ENCODE measurements at regions of chr9 and their contacts with region 1.

Region 1: DNA sequence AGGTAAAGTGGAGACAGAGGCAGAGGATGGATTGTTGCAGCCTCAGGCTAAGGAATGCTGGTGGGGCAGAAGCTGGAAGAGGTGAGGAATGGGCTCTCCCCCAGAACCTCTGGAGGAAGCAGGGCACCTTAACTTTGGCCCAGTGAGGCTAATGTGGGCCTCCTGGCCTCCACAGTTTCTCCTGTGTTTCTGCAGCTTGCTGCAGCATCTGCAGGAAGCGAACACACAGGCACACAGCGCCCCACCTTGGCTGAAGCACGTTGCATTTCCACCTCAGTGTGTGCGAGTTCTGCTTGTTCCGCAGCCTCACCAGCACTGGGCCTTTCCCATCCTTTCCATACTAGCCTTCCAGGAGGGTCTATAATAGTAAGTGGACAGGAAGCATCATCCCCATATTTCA is 27.2 kb upstream of the ASS1 start:
- DNase-seq: no peak
- H3K4me3 ChIP-seq: no peak overlapping the region
- H3K27ac ChIP-seq: no peak overlapping the region
- H3K4me1 ChIP-seq: no peaks in the 10 kb centered on the region
- H3K27me3 ChIP-seq: peaks cover 0 to 13% of the 10 kb centered on the region in 2 donors
- CTCF ChIP-seq: no peak

Region 2: GRCh38 chr9:129854588-129855110 is 563.0 kb before region 1 on chr9:
- intact Hi-C with region 1: loop called (anchors 5 kb)
- DNase-seq: no peak
- H3K4me3 ChIP-seq: no peak overlapping the region
- H3K27ac ChIP-seq: peak overlapping the region in 1 of 2 donors; percentile 5
- H3K4me1 ChIP-seq: peaks cover 0 to 47% (median 29%) of the 10 kb centered on the region in 4 donors
- H3K27me3 ChIP-seq: no peaks in the 10 kb centered on the region
- CTCF ChIP-seq: no peak

Region 3: DNA sequence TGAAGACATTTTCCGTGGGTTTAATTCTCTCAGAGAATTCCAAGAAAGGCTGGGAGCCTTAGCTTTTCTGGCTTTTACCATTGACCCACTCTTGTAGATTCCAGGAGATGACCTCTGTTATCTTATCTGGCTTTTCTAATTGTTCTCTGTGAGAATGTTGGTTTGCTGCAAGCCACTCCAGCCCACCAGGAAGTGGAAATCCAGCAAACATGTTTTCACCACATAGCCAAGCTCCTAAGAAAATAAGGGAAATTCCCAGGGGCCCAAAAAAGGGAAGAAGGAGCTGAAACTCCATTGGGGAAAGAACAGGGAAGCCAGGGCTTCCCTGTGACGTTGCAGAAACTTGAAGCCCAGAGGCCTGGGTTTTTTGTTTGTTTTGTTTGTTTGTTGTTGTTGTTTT is 344.2 kb before region 1 on chr9:
- intact Hi-C with region 1: no loop called
- DNase-seq: no peak
- H3K4me3 ChIP-seq: no peak overlapping the region
- H3K27ac ChIP-seq: peak overlapping the region; percentile 24 to 52
- H3K4me1 ChIP-seq: peaks cover 0 to 37% (median 18%) of the 10 kb centered on the region in 4 donors
- H3K27me3 ChIP-seq: no peaks in the 10 kb centered on the region
- CTCF ChIP-seq: no peak